A673 (cell line): ENCODE measurements at regions of chr7 and their contacts with region 1.

Region 1: GRCh38 chr7:80277434-80278427 is 143.1 kb downstream of the GNAI1 start:
- DNase-seq: peak; percentile 92
- H3K4me3 ChIP-seq: peak overlapping the region; percentile 2
- H3K27ac ChIP-seq: peak overlapping the region; percentile 79
- H3K4me1 ChIP-seq: peaks cover 61% of the 10 kb centered on the region
- H3K27me3 ChIP-seq: no peaks in the 10 kb centered on the region
- CTCF ChIP-seq: no peak

Region 2: GRCh38 chr7:80218723-80219122 is 59.0 kb before region 1 on chr7:
- CTCF ChIA-PET with region 1: no interaction called
- POLR2A ChIA-PET with region 1: no interaction called
- intact Hi-C with region 1: loop called (anchors 10 kb)
- DNase-seq: no peak
- H3K4me3 ChIP-seq: no peak overlapping the region
- H3K27ac ChIP-seq: no peak overlapping the region
- H3K4me1 ChIP-seq: no peaks in the 10 kb centered on the region
- H3K27me3 ChIP-seq: no peaks in the 10 kb centered on the region
- CTCF ChIP-seq: no peak

Region 3: DNA sequence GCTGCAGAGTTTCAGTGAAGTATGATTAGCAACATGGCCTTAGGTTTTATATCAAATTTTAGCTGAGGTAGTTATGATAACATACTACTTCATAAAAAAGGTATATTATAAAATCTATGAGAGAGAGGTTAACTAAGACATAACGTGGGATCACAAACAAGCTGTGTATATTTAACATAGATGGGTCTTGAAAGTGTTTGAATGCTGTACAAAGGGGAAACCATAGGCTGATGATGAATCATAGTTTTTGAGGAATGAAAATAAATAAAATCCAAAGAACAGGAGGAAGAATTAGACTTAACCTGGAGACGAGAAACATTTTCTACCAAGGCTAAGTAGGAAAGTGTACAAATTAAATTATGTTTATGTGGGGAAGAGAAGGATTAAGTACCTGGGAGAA is 24.1 kb before region 1 on chr7:
- CTCF ChIA-PET with region 1: no interaction called
- POLR2A ChIA-PET with region 1: no interaction called
- intact Hi-C with region 1: no loop called
- DNase-seq: no peak
- H3K4me3 ChIP-seq: no peak overlapping the region
- H3K27ac ChIP-seq: no peak overlapping the region
- H3K4me1 ChIP-seq: peaks cover 9% of the 10 kb centered on the region
- H3K27me3 ChIP-seq: no peaks in the 10 kb centered on the region
- CTCF ChIP-seq: no peak

Region 4: GRCh38 chr7:80439894-80440821 is 162.4 kb after region 1 on chr7:
- CTCF ChIA-PET with region 1: no interaction called
- POLR2A ChIA-PET with region 1: no interaction called
- intact Hi-C with region 1: loop called (anchors 1 kb)
- DNase-seq: peak; percentile 96
- H3K4me3 ChIP-seq: no peak overlapping the region
- H3K27ac ChIP-seq: peak overlapping the region; percentile 70
- H3K4me1 ChIP-seq: peaks cover 21% of the 10 kb centered on the region
- H3K27me3 ChIP-seq: no peaks in the 10 kb centered on the region
- CTCF ChIP-seq: no peak